ENCODE measurements at regions of chr11 and their contacts with region 1.

Region 1: DNA sequence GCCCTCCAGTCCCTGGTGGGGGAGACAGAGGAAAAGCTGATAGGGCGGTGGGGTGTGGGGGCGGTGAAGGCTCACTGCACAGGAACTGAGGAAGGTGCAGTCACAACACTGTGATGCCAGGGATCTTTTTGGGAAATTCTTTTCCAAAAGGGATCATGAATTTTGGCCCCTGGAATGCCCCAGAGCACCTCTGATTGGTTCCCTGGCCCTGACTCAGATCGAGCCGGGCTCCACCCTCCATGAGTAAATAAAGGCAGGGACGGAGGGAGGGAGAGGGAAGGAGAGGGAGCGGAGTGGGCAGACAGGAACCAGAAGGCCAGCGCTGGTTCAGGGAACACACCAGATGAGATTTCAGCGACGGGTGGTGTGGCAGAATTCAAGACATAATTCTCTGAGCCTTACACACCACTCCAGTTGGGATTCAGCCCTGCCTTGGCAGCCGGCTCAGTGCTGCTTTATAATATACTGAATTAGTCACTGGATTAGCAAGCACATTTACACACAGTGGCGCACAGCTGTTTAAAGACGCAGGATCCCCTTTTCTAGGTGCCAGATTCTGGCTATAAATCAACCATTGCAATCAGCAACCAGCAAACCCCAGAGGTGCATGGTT is 80.3 kb downstream of the ETS1 start:
- DNase-seq: peak; percentile 51
- H3K4me3 Mint-ChIP-seq: peak overlapping the region; percentile 96
- H3K27ac Mint-ChIP-seq: peak overlapping the region; percentile 95
- H3K4me1 Mint-ChIP-seq: peaks cover 99% of the 10 kb centered on the region
- H3K27me3 Mint-ChIP-seq: no peaks in the 10 kb centered on the region

Region 2: GRCh38 chr11:128290106-128290840 is 216.8 kb before region 1 on chr11:
- CTCF ChIA-PET with region 1: interaction called, 13 read pairs
- DNase-seq: peak; percentile 82
- H3K4me3 Mint-ChIP-seq: peak overlapping the region; percentile 85
- H3K27ac Mint-ChIP-seq: peak overlapping the region; percentile 96
- H3K4me1 Mint-ChIP-seq: peaks cover 92% of the 10 kb centered on the region
- H3K27me3 Mint-ChIP-seq: no peaks in the 10 kb centered on the region

Region 3: DNA sequence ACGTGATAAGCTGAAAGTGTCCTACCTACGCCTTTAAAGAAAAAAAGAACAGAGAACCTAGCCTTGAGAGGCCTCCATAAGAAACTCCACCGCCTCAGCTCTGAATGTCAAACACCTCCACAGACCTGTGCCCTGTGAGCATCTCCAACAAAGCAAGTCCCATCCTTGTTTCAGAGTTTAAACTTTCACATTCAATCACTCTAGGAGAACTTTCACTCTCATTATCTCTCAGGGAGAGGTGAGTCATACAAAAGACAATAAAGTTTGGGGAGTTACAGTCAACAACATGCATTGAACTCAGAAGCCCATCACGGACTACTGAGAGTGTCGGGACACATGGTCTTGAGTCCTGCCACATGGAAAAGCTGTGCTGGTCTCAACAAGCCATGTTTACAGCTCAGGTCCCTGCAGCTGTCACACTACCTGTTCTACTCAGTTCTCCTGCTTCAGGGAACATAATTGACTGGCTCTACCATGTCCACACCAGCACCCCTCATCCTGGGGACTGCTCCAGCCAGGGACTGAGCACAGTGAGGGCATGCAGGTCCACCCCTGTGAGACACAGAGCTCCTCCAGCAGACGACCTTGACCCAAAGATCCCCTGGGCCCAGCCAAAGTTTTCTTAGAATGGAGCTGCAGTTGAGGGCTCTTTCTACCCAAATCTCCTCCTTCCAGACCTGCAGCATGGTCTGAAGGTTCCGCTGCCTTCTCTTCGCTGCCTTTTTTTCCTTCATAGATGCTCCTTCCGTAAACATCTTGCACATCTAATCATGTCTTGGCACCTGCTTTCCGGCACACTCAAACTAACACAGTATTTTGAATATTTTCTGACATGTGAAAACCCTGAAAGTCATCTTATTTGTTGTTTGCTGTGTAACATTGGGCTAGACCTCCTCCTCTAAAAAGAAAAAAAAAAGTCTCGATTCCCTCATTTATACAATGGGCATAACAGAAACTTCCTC is 34.7 kb before region 1 on chr11:
- CTCF ChIA-PET with region 1: interaction called, 44 read pairs
- DNase-seq: peak; percentile 78
- H3K4me3 Mint-ChIP-seq: peak overlapping the region; percentile 47
- H3K27ac Mint-ChIP-seq: peak overlapping the region; percentile 92
- H3K4me1 Mint-ChIP-seq: peaks cover 98% of the 10 kb centered on the region
- H3K27me3 Mint-ChIP-seq: no peaks in the 10 kb centered on the region

Region 4: GRCh38 chr11:128482512-128483191 is 24.5 kb before region 1 on chr11:
- CTCF ChIA-PET with region 1: interaction called, 19 read pairs
- DNase-seq: peak; percentile 60
- H3K4me3 Mint-ChIP-seq: peak overlapping the region; percentile 77
- H3K27ac Mint-ChIP-seq: peak overlapping the region; percentile 92
- H3K4me1 Mint-ChIP-seq: peaks cover 98% of the 10 kb centered on the region
- H3K27me3 Mint-ChIP-seq: no peaks in the 10 kb centered on the region

Region 5: DNA sequence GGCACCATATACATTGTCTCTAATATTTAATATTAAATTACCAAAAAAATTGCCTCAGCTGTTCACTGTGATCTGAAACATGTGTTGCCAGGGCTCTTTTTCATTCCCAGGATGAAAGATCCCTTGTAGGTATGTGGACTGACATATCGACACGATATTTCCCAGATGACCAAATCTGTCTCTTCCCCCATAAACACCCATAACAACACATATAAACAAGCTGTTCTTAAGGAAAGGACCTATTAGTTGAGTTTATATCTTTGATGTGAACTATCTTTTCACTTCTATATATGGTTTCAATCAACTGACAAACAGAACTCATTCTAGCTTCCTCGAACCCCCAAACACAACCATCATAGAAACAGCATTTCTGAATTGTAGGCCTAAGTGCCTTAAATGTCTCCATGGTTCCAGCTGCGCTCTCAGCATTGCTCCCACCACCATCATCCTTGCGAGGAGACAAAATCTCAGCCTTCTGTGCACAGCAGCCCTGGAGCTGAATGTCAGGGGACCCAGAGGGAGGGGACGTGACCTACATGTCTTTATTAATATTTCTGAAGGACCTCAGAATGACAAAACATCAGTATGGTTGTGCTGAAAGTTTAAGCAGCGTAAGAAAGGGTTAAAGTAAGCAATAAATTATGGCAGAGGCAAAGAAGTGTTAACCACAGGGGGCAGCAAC is 13.2 kb after region 1 on chr11:
- CTCF ChIA-PET with region 1: interaction called, 17 read pairs
- DNase-seq: peak; percentile 49
- H3K4me3 Mint-ChIP-seq: peak overlapping the region; percentile 96
- H3K27ac Mint-ChIP-seq: peak overlapping the region; percentile 100
- H3K4me1 Mint-ChIP-seq: peaks cover 41% of the 10 kb centered on the region
- H3K27me3 Mint-ChIP-seq: no peaks in the 10 kb centered on the region

Region 6: GRCh38 chr11:128525411-128526243 is 18.5 kb after region 1 on chr11:
- CTCF ChIA-PET with region 1: interaction called, 10 read pairs
- DNase-seq: peak; percentile 58
- H3K4me3 Mint-ChIP-seq: peak overlapping the region; percentile 59
- H3K27ac Mint-ChIP-seq: peak overlapping the region; percentile 100
- H3K4me1 Mint-ChIP-seq: peaks cover 71% of the 10 kb centered on the region
- H3K27me3 Mint-ChIP-seq: no peaks in the 10 kb centered on the region